ENCODE measurements at regions of chr1 and their contacts with region 1.

Region 1: GRCh38 chr1:154198756-154199562 is 7.1 kb upstream of the TPM3 start:
- DNase-seq: peak; percentile 69
- ATAC-seq: peak; percentile 91
- H3K4me3 ChIP-seq: peak overlapping the region; percentile 19; the same call in 1 of the 2 replicates
- H3K27ac ChIP-seq: no peak overlapping the region
- H3K4me1 ChIP-seq: no peaks in the 10 kb centered on the region; the same call in 1 of the 2 replicates
- H3K27me3 ChIP-seq: peaks cover 13% of the 10 kb centered on the region
- CTCF ChIP-seq: peak; percentile 64
- POLR2A ChIP-seq: no peak
- RAD21 ChIP-seq: peak; percentile 57

Region 2: GRCh38 chr1:154141240-154141639 is 57.7 kb before region 1 on chr1:
- CTCF ChIA-PET with region 1: no interaction called
- POLR2A ChIA-PET with region 1: no interaction called
- dilution Hi-C with region 1: no loop called
- in situ Hi-C with region 1: no loop called
- intact Hi-C with region 1: no loop called
- DNase-seq: peak; percentile 51
- ATAC-seq: peak; percentile 35; the same call in 1 of the 2 replicates
- H3K4me3 ChIP-seq: no peak overlapping the region
- H3K27ac ChIP-seq: no peak overlapping the region
- H3K4me1 ChIP-seq: no peaks in the 10 kb centered on the region
- H3K27me3 ChIP-seq: no peaks in the 10 kb centered on the region
- CTCF ChIP-seq: no peak
- POLR2A ChIP-seq: no peak
- RAD21 ChIP-seq: no peak

Region 3: DNA sequence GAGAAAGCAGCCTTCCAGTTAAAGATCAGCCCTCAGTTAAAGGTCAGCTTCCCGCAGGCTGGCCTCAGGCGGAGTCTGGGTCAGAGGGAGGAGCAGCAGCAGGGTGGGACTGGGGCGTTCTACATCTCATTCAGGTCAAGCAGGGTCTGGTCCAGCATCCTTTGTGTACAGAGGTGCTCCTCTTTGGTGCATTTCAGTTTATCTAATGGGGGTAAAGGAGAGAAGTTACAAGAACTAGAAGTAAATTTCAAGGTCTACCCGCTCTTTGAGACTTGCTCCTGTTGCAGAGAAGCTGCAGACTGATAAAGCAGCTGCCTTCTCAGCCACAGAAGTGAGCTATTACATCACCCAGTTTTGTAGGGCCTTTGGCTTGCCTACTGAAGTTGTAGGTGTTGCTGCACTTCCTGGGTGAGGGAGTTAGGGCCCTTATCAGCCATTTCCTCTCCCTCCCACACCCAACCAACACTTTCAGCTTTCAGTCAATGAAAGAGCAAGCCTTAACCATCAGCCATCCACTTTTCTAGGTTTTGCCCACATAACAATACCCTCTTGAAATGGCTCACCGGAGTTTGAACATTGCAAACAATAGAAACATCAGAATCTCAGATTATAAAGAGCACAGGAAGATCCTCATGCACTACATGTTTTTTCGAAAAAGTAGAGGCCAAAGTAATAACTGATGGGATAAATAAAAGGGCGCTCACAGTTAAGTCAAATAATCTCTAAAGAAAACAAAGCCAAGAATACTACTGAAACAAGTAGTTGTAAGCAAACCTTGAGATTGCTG is 41.2 kb before region 1 on chr1:
- CTCF ChIA-PET with region 1: no interaction called
- POLR2A ChIA-PET with region 1: interaction called, 12 read pairs
- dilution Hi-C with region 1: no loop called
- in situ Hi-C with region 1: no loop called
- intact Hi-C with region 1: no loop called
- DNase-seq: peak; percentile 31
- ATAC-seq: peak; percentile 7; the same call in 1 of the 2 replicates
- H3K4me3 ChIP-seq: no peak overlapping the region
- H3K27ac ChIP-seq: peak overlapping the region; percentile 57; the same call in 1 of the 2 replicates
- H3K4me1 ChIP-seq: peaks cover 8% of the 10 kb centered on the region
- H3K27me3 ChIP-seq: no peaks in the 10 kb centered on the region
- CTCF ChIP-seq: no peak
- POLR2A ChIP-seq: no peak
- RAD21 ChIP-seq: no peak